Naive thymus-derived CD4-positive, alpha-beta T cell (primary cell): ENCODE measurements at regions of chr13 and their contacts with region 1.

Region 1: GRCh38 chr13:51814825-51815650 is 11.1 kb upstream of the DHRS12 start:
- DNase-seq: peak; percentile 40 to 81 (median 70)
- ATAC-seq: peak; percentile 84
- H3K4me3 ChIP-seq: peak overlapping the region; percentile 3
- H3K4me3 Mint-ChIP-seq: peak overlapping the region; percentile 44 to 100 (median 74)
- H3K27ac ChIP-seq: peak overlapping the region; percentile 85
- H3K27ac Mint-ChIP-seq: peak overlapping the region; percentile 61 to 99 (median 95)
- H3K4me1 ChIP-seq: peaks cover 21 to 75% of the 10 kb centered on the region in 2 donors
- H3K4me1 Mint-ChIP-seq: peaks cover 42 to 90% (median 86%) of the 10 kb centered on the region in 7 donors
- H3K27me3 ChIP-seq: no peaks in the 10 kb centered on the region
- H3K27me3 Mint-ChIP-seq: no peaks in the 10 kb centered on the region

Region 2: DNA sequence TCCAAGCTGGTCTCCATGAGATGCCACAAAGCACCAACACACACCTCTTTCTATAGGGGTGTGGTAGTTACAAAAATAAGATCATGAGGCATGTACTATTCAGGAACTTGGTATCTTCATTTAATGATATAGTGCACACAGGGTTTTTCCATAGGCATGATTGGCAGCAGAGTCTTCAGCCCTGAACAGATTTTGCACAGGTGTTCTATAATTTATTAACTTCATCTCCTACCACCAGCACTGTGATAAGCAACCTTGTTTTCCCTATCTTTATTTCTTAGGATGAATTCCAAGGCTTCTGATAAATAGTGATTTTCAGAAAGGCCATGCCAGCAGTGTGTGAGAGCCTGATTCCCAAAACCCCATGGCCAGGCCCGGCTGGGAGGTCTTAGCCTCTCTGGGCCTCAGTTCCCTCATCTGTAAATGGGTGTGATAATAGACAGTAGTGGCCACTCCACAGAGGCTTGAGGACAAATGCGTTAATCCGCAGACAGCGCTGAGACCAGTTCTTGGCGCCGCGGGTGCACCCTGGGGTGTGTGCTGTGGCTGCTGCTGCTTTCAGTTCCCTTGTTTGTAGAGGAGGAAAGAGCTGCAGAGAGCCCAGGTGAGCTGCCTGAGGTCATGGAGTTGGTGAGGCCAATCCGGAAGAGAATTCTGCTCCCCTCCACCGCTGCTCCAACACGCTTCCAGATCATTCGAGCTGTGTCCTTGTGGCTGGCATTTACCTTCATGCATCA is 44.2 kb before region 1 on chr13:
- CTCF ChIA-PET with region 1: no interaction called
- POLR2A ChIA-PET with region 1: no interaction called
- intact Hi-C with region 1: no loop called
- DNase-seq: no peak
- ATAC-seq: peak; percentile 16
- H3K4me3 ChIP-seq: no peak overlapping the region
- H3K4me3 Mint-ChIP-seq: no peak overlapping the region
- H3K27ac ChIP-seq: no peak overlapping the region
- H3K27ac Mint-ChIP-seq: peak overlapping the region in 5 of 9 donors; percentile 39 to 71 (median 48)
- H3K4me1 ChIP-seq: no peaks in the 10 kb centered on the region
- H3K4me1 Mint-ChIP-seq: peaks cover 0 to 10% (median 7%) of the 10 kb centered on the region in 7 donors
- H3K27me3 ChIP-seq: no peaks in the 10 kb centered on the region
- H3K27me3 Mint-ChIP-seq: no peaks in the 10 kb centered on the region

Region 3: DNA sequence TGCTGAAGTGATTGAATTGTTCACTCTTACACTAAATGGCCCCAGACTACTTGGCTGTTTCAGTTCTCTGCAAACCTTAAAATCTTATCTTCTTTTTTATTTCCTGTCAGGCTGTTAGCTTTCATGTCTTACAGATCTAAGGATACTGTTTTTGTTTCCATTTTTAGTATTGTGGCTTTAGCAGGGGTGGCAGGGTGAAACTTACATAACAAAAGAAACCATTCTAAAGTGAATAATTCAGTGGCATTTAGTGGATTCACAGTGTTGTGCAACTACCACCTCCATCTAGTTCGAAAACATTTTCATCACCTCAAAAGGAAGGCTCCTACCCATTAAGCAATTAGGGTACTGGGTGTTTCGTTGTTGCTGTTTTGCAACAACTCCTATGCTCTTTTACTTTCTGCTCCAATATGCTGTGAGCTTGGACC is 10.1 kb after region 1 on chr13:
- CTCF ChIA-PET with region 1: interaction called, 126 read pairs
- POLR2A ChIA-PET with region 1: interaction called, 324 read pairs
- intact Hi-C with region 1: loop called (anchors 1 kb)
- DNase-seq: peak in 7 of 9 donors; percentile 62 to 90 (median 84)
- ATAC-seq: peak; percentile 81
- H3K4me3 ChIP-seq: peak overlapping the region; percentile 75
- H3K4me3 Mint-ChIP-seq: peak overlapping the region; percentile 62 to 100 (median 97)
- H3K27ac ChIP-seq: peak overlapping the region; percentile 85
- H3K27ac Mint-ChIP-seq: peak overlapping the region; percentile 86 to 99 (median 95)
- H3K4me1 ChIP-seq: peaks cover 61 to 78% of the 10 kb centered on the region in 2 donors
- H3K4me1 Mint-ChIP-seq: peaks cover 57 to 80% (median 63%) of the 10 kb centered on the region in 7 donors
- H3K27me3 ChIP-seq: no peaks in the 10 kb centered on the region
- H3K27me3 Mint-ChIP-seq: peaks cover 0 to 10% (median 0%) of the 10 kb centered on the region in 5 donors

Region 4: DNA sequence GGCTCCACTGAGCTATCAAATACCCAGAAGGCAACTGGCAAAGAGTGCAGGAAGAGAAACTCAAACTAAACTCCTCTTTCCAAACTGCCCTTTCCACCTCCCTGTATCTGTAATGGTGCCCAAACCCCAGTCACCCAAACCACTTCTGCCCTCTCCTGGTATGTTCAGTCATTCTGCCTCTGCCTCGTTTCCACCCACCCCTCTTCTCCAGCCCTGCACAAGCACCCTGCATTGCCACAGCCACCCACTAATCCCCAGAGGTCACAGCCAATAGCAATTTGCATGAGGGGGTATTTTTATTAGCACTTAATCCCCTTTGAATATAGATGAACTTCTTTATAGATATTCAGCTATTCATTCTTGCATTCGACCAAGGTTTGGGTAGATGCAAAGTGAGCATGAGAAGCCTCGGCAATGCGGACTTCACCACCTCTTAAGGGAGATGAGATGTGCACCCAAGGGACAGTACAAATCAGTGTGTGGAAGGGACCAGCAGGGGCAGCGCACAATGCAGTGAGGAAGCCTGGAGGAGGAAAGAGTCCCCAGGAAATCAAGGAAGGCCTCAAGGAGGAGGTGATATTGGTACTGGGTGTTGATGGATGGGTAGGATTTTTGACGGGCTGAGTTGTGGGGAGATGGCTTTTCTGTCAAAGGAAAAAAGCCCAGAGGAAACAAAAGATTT is 17.6 kb after region 1 on chr13:
- CTCF ChIA-PET with region 1: interaction called, 192 read pairs
- POLR2A ChIA-PET with region 1: interaction called, 324 read pairs
- intact Hi-C with region 1: loop called (anchors 1 kb)
- DNase-seq: peak in 7 of 9 donors; percentile 68 to 82 (median 76)
- ATAC-seq: peak; percentile 98
- H3K4me3 ChIP-seq: no peak overlapping the region
- H3K4me3 Mint-ChIP-seq: peak overlapping the region in 9 of 10 donors; percentile 37 to 77 (median 55)
- H3K27ac ChIP-seq: no peak overlapping the region
- H3K27ac Mint-ChIP-seq: peak overlapping the region in 8 of 9 donors; percentile 68 to 99 (median 78)
- H3K4me1 ChIP-seq: peaks cover 4 to 33% of the 10 kb centered on the region in 2 donors
- H3K4me1 Mint-ChIP-seq: peaks cover 28 to 54% (median 51%) of the 10 kb centered on the region in 7 donors
- H3K27me3 ChIP-seq: no peaks in the 10 kb centered on the region
- H3K27me3 Mint-ChIP-seq: peaks cover 0 to 8% (median 0%) of the 10 kb centered on the region in 5 donors

Region 5: GRCh38 chr13:51844862-51845573 is 30.0 kb after region 1 on chr13 and contains the start of gene TMEM272:
- CTCF ChIA-PET with region 1: interaction called, 15 read pairs
- POLR2A ChIA-PET with region 1: interaction called, 3 read pairs
- intact Hi-C with region 1: loop called (anchors 1 kb)
- DNase-seq: peak in 8 of 9 donors; percentile 26 to 69 (median 42)
- ATAC-seq: peak; percentile 88
- H3K4me3 ChIP-seq: no peak within 1 kb of the TSS
- H3K4me3 Mint-ChIP-seq: peak within 1 kb of the TSS in 8 of 10 donors; percentile 19 to 75 (median 58)
- H3K27ac ChIP-seq: no peak within 1 kb of the TSS
- H3K27ac Mint-ChIP-seq: no peak within 1 kb of the TSS
- H3K4me1 ChIP-seq: peaks cover 0 to 6% of the 10 kb centered on the region in 2 donors
- H3K4me1 Mint-ChIP-seq: peaks cover 0 to 12% (median 7%) of the 10 kb centered on the region in 7 donors
- H3K27me3 ChIP-seq: no peaks in the 10 kb centered on the region
- H3K27me3 Mint-ChIP-seq: peaks cover 0 to 24% (median 11%) of the 10 kb centered on the region in 5 donors
- total RNA-seq, gene TMEM272: 0.19 to 23.3 (median 5.9) TPM

Region 6: GRCh38 chr13:51881296-51881695 is 66.3 kb after region 1 on chr13:
- CTCF ChIA-PET with region 1: no interaction called
- POLR2A ChIA-PET with region 1: no interaction called
- intact Hi-C with region 1: no loop called
- DNase-seq: no peak
- ATAC-seq: no peak
- H3K4me3 ChIP-seq: no peak overlapping the region
- H3K4me3 Mint-ChIP-seq: no peak overlapping the region
- H3K27ac ChIP-seq: no peak overlapping the region
- H3K27ac Mint-ChIP-seq: no peak overlapping the region
- H3K4me1 ChIP-seq: no peaks in the 10 kb centered on the region
- H3K4me1 Mint-ChIP-seq: no peaks in the 10 kb centered on the region
- H3K27me3 ChIP-seq: no peaks in the 10 kb centered on the region
- H3K27me3 Mint-ChIP-seq: peaks cover 0 to 14% (median 3%) of the 10 kb centered on the region in 5 donors

Region 7: GRCh38 chr13:51895906-51896888 is 81.2 kb after region 1 on chr13:
- CTCF ChIA-PET with region 1: no interaction called
- POLR2A ChIA-PET with region 1: no interaction called
- intact Hi-C with region 1: loop called in 1 of 2 experiments (anchors 1 kb)
- DNase-seq: peak in 8 of 9 donors; percentile 16 to 55 (median 40)
- ATAC-seq: peak; percentile 73
- H3K4me3 ChIP-seq: no peak overlapping the region
- H3K4me3 Mint-ChIP-seq: no peak overlapping the region
- H3K27ac ChIP-seq: no peak overlapping the region
- H3K27ac Mint-ChIP-seq: peak overlapping the region in 2 of 9 donors; percentile 22 to 42
- H3K4me1 ChIP-seq: no peaks in the 10 kb centered on the region
- H3K4me1 Mint-ChIP-seq: peaks cover 0 to 8% (median 0%) of the 10 kb centered on the region in 7 donors
- H3K27me3 ChIP-seq: no peaks in the 10 kb centered on the region
- H3K27me3 Mint-ChIP-seq: peaks cover 7 to 26% (median 11%) of the 10 kb centered on the region in 5 donors